HAP-1 (cell line): ENCODE measurements at regions of chr6 and their contacts with region 1.

Region 1: GRCh38 chr6:121430514-121431460 is 4.7 kb upstream of the GJA1 start:
- DNase-seq: peak in 1 of 2 experiments; percentile 64
- H3K4me3 ChIP-seq: no peak overlapping the region
- H3K4me1 ChIP-seq: peaks cover 9% of the 10 kb centered on the region
- H3K27me3 ChIP-seq: peaks cover 28% of the 10 kb centered on the region

Region 2: DNA sequence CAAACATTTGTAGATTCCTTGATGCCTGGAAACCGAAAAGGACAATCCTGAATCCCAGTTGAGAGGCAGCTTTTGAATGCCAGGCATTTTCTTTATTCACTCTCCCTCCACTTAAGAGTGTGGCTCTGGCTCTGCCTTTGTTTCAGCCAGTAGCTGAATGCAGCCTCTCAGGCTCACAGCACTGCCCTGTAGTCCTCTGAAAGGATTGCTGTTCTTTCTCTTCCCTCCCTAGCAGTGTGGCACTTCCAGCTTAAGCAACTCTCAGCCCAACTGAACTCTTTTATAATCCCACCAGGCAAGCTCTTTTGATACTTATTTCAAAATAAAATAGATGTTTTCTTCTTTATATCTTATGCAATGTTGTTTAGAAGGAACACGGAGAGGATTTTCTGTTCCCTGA is 420.3 kb after region 1 on chr6:
- in situ Hi-C with region 1: loop called (anchors 25 kb)
- DNase-seq: peak; percentile 65 to 74
- H3K4me3 ChIP-seq: no peak overlapping the region
- H3K4me1 ChIP-seq: peaks cover 5% of the 10 kb centered on the region
- H3K27me3 ChIP-seq: 0 out of 2 replicates have a peak, but pooled peaks cover 3% of the 10 kb centered on the region

Region 3: DNA sequence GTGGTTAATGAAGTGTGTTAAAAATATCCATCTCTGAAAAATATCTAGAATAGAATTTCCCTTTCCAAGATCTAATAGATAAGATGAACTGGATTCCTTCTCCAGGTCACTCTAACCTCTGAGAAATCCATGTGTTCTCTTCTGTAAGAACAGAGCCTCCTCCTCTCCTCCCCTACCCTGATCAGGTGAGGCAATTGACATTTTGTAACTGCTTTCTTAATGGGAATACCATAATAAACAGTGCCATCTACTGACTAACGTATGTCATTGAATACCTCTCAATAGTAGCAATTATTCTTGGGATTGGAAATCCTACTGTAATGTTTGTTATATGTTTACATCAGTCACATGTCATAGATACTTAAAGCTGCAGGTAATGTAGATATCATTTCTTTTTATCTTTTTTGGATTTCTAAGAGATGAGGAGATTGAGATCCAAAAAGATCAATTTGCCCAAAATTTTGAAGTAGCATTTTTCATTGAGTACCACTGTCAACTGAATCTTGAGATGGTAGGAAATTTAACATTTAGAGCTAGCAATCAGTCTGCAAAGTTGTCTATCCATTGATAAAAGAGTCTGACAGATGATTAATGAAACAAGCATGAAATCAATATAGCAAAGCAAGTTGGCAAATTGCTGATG is 602.9 kb after region 1 on chr6:
- in situ Hi-C with region 1: loop called (anchors 25 kb)
- DNase-seq: peak in 1 of 2 experiments; percentile 71
- H3K4me3 ChIP-seq: no peak overlapping the region
- H3K4me1 ChIP-seq: no peaks in the 10 kb centered on the region
- H3K27me3 ChIP-seq: peaks cover 3% of the 10 kb centered on the region; the same call in 1 of the 2 replicates